Activated CD4-positive, alpha-beta T cell treated with anti-CD3 and anti-CD28 coated beads for 36 hours (primary cell): ENCODE measurements at regions of chr13 and their contacts with region 1.

Region 1: DNA sequence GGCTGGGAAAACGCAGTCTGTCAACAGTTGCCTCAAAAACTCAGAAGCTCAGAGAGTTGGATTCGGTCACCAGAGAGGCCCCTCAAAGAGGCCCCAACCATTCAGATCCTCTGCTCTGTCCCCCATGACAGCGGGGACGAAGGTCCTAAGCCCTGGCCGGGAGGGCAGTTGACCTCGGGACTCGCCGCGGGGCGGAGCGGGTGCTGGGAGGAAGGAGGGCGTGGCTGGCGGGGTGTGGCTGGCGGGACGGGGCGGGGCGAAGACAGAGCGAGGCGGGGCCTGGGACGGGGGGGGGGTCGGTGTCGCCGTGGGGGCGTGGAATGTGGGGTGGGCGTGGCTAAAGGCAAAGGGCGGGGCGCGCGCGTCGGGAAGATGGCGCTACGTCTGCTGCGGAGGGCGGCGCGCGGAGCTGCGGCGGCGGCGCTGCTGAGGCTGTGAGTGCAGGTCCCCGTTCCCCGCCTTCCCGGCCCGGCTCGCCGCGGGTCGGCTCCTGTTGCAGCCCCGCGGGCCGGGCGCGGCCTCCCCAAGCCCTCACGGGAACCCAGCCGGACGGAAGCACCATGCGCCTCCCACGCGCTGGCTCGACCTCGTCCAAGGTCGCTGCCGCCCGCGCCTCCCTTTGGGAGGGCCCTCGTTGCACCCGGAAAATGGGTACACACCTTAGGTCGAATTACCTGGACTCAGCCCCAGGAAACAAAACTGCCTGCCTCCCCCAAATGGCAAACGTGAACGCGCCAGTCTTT is 105.2 kb downstream of the TM9SF2 start:
- DNase-seq: peak; percentile 95
- ATAC-seq: peak; percentile 89
- H3K4me3 Mint-ChIP-seq: peak within 1 kb of the TSS; percentile 83
- H3K27ac Mint-ChIP-seq: peak within 1 kb of the TSS; percentile 81
- H3K4me1 Mint-ChIP-seq: peaks cover 42% of the 10 kb centered on the region
- H3K27me3 Mint-ChIP-seq: no peaks in the 10 kb centered on the region

Region 2: DNA sequence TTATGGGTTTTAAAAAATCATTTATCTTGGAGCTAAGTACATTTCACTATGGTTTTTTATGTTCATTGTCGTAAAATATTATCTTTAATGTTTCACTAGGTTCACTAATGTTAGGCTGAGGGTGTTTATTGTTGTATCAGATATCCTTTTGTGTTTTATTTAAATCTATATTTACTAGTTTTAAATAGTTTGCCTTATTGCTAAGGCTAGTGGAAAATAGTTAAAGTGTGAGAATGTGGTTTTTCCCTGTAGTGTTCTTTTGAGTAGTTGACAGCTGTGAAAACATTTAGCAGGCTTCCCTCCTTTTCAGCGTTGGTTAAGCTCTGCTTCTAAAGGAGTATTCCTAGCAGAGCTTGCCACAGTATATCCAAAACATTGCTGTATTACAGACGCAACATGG is 33.8 kb after region 1 on chr13:
- CTCF ChIA-PET with region 1: no interaction called
- POLR2A ChIA-PET with region 1: no interaction called
- intact Hi-C with region 1: no loop called
- DNase-seq: no peak
- ATAC-seq: no peak
- H3K4me3 Mint-ChIP-seq: no peak overlapping the region
- H3K27ac Mint-ChIP-seq: no peak overlapping the region
- H3K4me1 Mint-ChIP-seq: no peaks in the 10 kb centered on the region
- H3K27me3 Mint-ChIP-seq: no peaks in the 10 kb centered on the region

Region 3: GRCh38 chr13:99666146-99666805 is 59.8 kb after region 1 on chr13:
- CTCF ChIA-PET with region 1: no interaction called
- POLR2A ChIA-PET with region 1: no interaction called
- intact Hi-C with region 1: no loop called
- DNase-seq: no peak
- ATAC-seq: no peak
- H3K4me3 Mint-ChIP-seq: no peak overlapping the region
- H3K27ac Mint-ChIP-seq: no peak overlapping the region
- H3K4me1 Mint-ChIP-seq: no peaks in the 10 kb centered on the region
- H3K27me3 Mint-ChIP-seq: no peaks in the 10 kb centered on the region

Region 4: GRCh38 chr13:100088644-100089464 is 482.4 kb after region 1 on chr13 and contains the start of gene PCCA:
- CTCF ChIA-PET with region 1: interaction called, 3 read pairs
- POLR2A ChIA-PET with region 1: no interaction called
- intact Hi-C with region 1: loop called in 1 of 2 experiments (anchors 1 kb)
- DNase-seq: peak; percentile 86
- ATAC-seq: peak; percentile 87
- H3K4me3 Mint-ChIP-seq: peak within 1 kb of the TSS; percentile 78
- H3K27ac Mint-ChIP-seq: peak within 1 kb of the TSS; percentile 84
- H3K4me1 Mint-ChIP-seq: peaks cover 14% of the 10 kb centered on the region
- H3K27me3 Mint-ChIP-seq: no peaks in the 10 kb centered on the region
- total RNA-seq, gene PCCA: 5.8 to 7.3 TPM

Region 5: DNA sequence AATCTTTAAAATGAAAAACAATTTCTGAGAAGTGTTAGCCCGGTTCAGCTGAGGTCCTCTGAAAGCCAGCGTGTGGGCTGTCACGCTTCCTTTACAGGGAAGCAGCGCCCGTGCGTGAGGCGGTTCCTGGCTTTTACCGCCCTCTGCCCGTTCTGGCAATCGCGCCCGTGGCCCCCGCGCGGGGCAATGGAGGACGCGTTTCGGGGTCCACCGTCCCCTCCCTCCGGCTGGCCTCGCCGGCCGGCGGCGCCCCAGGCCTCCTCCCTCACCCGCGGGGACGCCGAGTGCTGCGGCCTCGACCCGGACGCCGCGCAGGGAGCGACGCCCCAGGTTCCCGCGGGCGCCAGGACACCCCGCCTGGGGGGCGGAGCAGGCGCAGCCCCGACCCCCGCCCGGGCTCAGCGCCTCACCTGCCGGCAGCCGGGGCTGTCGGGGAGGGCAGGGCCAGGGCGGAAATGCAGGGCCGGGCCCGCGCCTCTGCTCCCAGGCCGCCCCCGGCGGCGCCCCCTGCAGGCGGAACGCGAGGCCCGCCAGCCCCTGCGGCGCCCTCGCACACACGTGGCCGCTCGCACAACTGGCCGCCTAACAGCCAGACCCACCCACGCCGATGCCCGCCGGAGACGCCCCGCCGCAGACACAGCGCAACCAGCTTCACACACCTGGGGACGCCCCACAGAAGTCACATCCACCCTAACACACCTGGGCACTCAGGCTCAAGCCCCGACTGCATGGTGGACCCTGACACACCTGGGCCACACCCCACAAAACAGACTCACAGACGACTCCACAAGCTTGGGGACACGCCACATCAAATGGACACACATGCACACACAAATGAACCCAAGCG is 982.1 kb after region 1 on chr13 and contains the start of gene GGACT:
- CTCF ChIA-PET with region 1: no interaction called
- POLR2A ChIA-PET with region 1: no interaction called
- intact Hi-C with region 1: loop called in 1 of 2 experiments (anchors 1 kb)
- DNase-seq: peak; percentile 90
- ATAC-seq: peak; percentile 94
- H3K4me3 Mint-ChIP-seq: peak within 1 kb of the TSS; percentile 75
- H3K27ac Mint-ChIP-seq: peak within 1 kb of the TSS; percentile 86
- H3K4me1 Mint-ChIP-seq: peaks cover 37% of the 10 kb centered on the region
- H3K27me3 Mint-ChIP-seq: no peaks in the 10 kb centered on the region
- total RNA-seq, gene GGACT: 6.8 to 7.0 TPM

Region 6: GRCh38 chr13:100674848-100675660 is 1068.6 kb after region 1 on chr13:
- CTCF ChIA-PET with region 1: interaction called, 3 read pairs
- POLR2A ChIA-PET with region 1: no interaction called
- intact Hi-C with region 1: loop called in 1 of 2 experiments (anchors 1 kb)
- DNase-seq: peak; percentile 99
- ATAC-seq: peak; percentile 96
- H3K4me3 Mint-ChIP-seq: peak overlapping the region; percentile 77
- H3K27ac Mint-ChIP-seq: peak overlapping the region; percentile 83
- H3K4me1 Mint-ChIP-seq: peaks cover 23% of the 10 kb centered on the region
- H3K27me3 Mint-ChIP-seq: peaks cover 7% of the 10 kb centered on the region